GM13976 (cell line): ENCODE measurements at regions of chr1 and their contacts with region 1.

Region 1: GRCh38 chr1:168603501-168604110 is 27.2 kb downstream of the XCL1 start:
- DNase-seq: peak; percentile 46
- CTCF ChIP-seq: peak; percentile 79

Region 2: DNA sequence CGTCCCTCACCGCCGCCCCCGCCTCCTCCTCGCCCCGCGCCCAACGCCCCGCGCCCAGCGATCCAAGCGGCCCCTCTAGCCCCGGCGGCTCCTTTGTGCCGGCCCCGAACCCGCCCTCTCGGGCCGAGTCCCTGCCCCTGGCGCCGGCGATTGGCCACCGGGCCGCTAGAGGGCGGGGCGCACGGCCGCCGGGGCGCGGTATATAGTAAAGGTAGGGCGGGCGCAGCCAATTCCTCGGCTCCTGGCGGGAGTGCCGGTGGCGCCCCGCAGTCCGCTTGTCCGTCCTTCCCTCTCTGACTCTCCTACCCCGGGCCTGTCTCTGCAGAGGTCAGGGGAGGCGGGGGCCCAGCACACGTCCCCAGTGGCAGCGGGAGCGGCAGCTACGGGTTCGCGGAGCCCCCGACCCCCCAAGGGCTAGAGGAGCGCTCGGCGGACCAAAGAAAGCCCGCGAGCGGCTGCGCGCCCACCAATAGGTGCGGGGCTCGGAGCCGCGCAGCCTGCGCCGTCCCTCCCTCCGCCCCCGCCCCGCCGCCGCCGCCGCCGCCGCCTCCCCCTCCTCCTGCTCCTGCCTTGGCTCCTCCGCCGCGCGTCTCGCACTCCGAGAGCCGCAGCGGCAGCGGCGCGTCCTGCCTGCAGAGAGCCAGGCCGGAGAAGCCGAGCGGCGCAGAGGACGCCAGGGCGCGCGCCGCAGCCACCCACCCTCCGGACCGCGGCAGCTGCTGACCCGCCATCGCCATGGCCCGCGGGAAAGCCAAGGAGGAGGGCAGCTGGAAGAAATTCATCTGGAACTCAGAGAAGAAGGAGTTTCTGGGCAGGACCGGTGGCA is 502.7 kb after region 1 on chr1 and contains the start of gene ATP1B1:
- in situ Hi-C with region 1: loop called (anchors 25 kb)
- DNase-seq: peak; percentile 95
- CTCF ChIP-seq: no peak

Region 3: DNA sequence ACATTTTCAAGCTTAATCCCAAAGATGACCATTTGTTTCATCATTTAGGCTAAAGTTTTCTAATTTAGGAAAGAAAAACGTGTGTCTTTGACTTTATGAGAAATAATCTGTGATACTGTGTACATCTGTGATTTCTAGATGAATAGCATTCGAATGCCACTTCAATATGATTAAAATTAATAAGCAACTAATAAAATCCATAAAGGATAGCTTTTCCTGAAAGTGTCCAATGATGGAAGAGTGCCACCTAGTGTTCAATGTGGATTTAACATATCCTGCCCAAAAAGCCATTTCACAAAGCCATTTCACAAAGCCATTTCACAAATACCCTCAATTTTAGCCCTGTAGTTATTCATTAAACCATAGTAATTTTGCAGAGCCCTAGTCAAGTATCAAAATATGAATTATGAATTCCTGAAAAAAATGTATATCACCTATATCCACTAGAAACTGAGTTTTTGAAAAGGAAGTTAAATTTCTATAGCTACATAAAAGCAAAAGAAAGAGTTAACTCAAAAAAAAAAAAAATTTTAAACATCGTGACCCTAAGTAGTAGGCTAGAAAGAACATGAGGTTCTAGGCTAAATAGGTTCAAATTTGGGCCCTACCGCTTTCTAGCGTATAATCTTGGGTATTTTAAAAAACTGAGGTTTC is 744.9 kb after region 1 on chr1:
- in situ Hi-C with region 1: loop called (anchors 10 kb)
- DNase-seq: peak; percentile 26
- CTCF ChIP-seq: peak; percentile 69

Region 4: GRCh38 chr1:169546087-169546995 is 942.7 kb after region 1 on chr1:
- in situ Hi-C with region 1: loop called (anchors 5 kb)
- DNase-seq: peak; percentile 12
- CTCF ChIP-seq: peak; percentile 72